Activated B cell treated with CpG ODN at 0.5 μM for 24 hours (primary cell): ENCODE measurements at regions of chr3 and their contacts with region 1.

Region 1: DNA sequence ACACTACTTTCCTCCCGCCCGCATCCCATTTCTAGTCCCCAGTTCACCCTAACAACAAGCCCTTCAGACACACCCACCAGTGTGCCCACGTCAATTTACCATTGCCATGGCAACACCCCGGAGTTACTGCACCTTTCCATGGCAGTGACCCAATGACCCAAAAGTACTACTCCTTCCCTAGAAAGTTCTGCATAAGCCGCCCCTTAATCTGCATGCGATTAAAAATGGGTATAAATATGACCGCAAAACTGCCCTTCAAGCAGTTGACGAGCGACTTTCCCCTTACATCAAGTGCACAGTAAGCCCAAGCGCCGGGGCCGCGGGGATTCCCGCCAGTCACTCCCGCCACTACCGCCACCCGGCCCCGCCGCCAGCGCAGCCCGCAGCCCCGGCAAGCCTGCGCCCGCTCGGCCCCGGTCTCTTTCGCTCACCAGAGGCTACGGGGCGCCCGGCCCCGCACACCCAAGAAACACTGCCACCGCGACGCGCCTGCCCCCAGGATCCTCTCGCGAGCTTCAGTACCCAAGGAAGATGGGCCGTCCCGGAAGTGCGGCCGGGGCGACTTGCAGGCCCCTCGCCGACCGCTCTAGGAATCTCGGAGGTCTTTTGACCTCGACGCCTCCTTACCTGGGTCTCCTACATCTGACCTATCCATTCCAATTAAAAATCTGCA is 27.2 kb upstream of the ZNF502 start:
- DNase-seq: peak; percentile 56
- ATAC-seq: peak; percentile 92
- H3K4me3 Mint-ChIP-seq: peak overlapping the region; percentile 96
- H3K27ac Mint-ChIP-seq: peak overlapping the region; percentile 76
- H3K4me1 Mint-ChIP-seq: peaks cover 19% of the 10 kb centered on the region
- H3K27me3 Mint-ChIP-seq: peaks cover 23% of the 10 kb centered on the region
- CTCF ChIP-seq: no peak

Region 2: GRCh38 chr3:44554626-44555592 is 130.4 kb before region 1 on chr3 and contains the start of gene ZKSCAN7:
- CTCF ChIA-PET with region 1: no interaction called
- POLR2A ChIA-PET with region 1: no interaction called
- intact Hi-C with region 1: loop called (anchors 1 kb)
- DNase-seq: peak; percentile 56
- ATAC-seq: peak; percentile 86
- H3K4me3 Mint-ChIP-seq: peak within 1 kb of the TSS; percentile 94
- H3K27ac Mint-ChIP-seq: peak within 1 kb of the TSS; percentile 87
- H3K4me1 Mint-ChIP-seq: peaks cover 20% of the 10 kb centered on the region
- H3K27me3 Mint-ChIP-seq: peaks cover 7% of the 10 kb centered on the region
- CTCF ChIP-seq: no peak
- total RNA-seq, gene ZKSCAN7: 6.8 and 9.2 TPM in 2 replicates

Region 3: DNA sequence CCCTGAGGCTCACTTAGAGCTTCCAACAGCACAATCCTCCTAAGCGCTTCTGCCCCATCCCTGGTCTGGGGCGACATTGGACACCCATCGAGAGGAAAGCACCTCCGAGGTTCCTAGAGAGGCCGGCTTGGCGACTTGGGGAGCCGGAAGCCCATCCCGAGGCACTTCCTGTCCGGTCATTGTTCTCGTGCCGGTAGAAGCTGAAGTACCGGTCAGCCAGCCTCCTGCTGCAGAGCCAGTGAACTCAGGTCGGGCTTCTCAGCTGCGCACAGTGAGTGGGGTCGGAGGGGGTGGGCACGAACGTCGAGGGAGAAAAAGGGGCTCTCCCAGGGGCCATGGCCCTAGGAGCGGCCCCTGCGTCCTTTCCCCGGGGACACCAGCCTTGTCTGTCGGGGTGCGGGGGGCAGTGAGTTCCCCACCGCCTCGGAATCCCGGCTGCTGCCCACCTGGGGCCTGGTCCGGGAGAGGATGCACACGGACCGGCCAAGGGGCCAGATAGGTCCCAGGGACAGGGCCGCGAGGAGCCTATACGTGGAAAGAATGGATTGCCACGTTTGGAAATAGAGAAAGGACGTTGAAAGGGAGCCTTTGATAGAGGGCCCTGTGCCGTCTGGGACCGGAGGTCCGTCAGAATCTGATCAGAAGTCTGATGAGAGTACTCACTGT is 36.6 kb before region 1 on chr3 and contains the start of gene ZNF35:
- CTCF ChIA-PET with region 1: no interaction called
- POLR2A ChIA-PET with region 1: interaction called, 4 read pairs
- intact Hi-C with region 1: loop called (anchors 1 kb)
- DNase-seq: peak; percentile 41
- ATAC-seq: peak; percentile 86
- H3K4me3 Mint-ChIP-seq: peak within 1 kb of the TSS; percentile 96
- H3K27ac Mint-ChIP-seq: peak within 1 kb of the TSS; percentile 83
- H3K4me1 Mint-ChIP-seq: peaks cover 24% of the 10 kb centered on the region
- H3K27me3 Mint-ChIP-seq: no peaks in the 10 kb centered on the region
- CTCF ChIP-seq: no peak
- total RNA-seq, gene ZNF35: 13.9 and 17.5 TPM in 2 replicates

Region 4: GRCh38 chr3:44712455-44713075 is 27.3 kb after region 1 on chr3 and contains the start of gene ZNF502:
- CTCF ChIA-PET with region 1: no interaction called
- POLR2A ChIA-PET with region 1: interaction called, 3 read pairs
- intact Hi-C with region 1: loop called (anchors 1 kb)
- DNase-seq: peak; percentile 48
- ATAC-seq: peak; percentile 93
- H3K4me3 Mint-ChIP-seq: peak within 1 kb of the TSS; percentile 90
- H3K27ac Mint-ChIP-seq: peak within 1 kb of the TSS; percentile 50
- H3K4me1 Mint-ChIP-seq: peaks cover 13% of the 10 kb centered on the region
- H3K27me3 Mint-ChIP-seq: peaks cover 21% of the 10 kb centered on the region
- CTCF ChIP-seq: no peak
- total RNA-seq, gene ZNF502: 5.0 and 6.5 TPM in 2 replicates

Region 5: DNA sequence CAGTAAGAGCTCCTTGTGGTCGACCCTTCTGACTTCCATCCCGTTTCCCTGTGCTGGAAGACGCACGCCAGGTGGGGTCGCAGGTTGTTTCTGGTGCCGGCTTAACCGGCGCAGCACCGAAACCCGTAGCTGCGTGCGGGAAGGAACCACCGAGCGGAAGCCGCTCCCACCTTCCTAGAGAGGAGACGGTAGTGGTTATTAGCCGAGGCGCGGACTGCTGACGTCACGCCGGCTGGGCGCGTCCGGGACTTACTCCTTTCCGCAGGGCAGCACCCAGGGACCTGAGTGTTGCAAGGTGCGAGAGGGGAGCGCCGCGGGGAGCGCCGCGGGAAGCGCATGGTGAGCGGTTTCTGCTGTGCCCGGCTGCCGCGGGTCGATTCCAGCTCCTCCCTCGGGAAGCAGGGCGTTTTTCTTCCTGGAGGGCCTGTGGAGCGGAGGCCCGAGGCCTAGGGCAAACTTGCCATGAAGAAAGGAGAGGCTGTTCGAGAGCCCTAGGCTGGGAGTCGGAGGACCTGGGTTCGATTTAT is 44.2 kb after region 1 on chr3 and contains the start of gene ZNF501:
- CTCF ChIA-PET with region 1: no interaction called
- POLR2A ChIA-PET with region 1: interaction called, 6 read pairs
- intact Hi-C with region 1: loop called (anchors 1 kb)
- DNase-seq: peak; percentile 80
- ATAC-seq: peak; percentile 98
- H3K4me3 Mint-ChIP-seq: peak within 1 kb of the TSS; percentile 92
- H3K27ac Mint-ChIP-seq: peak within 1 kb of the TSS; percentile 75
- H3K4me1 Mint-ChIP-seq: peaks cover 15% of the 10 kb centered on the region
- H3K27me3 Mint-ChIP-seq: no peaks in the 10 kb centered on the region
- CTCF ChIP-seq: no peak
- total RNA-seq, gene ZNF501: 6.2 and 6.5 TPM in 2 replicates

Region 6: DNA sequence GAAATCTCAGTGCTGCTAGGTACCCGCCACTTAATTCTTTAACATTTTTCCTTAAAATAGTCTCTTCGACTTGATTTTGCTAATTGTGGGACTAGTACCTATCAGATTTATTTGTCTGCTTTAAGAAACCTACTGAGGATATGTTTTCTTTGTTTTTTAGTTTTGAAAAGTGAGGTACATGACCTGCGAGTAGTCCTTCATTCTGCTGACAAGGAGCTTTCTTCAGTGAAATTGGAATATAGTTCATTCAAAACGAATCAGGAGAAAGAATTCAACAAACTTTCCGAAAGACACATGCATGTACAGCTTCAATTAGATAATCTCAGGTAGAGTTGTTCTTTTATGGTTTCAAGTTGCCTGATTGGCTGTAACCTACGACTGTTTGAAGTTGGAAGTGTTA is 129.5 kb after region 1 on chr3:
- CTCF ChIA-PET with region 1: no interaction called
- POLR2A ChIA-PET with region 1: no interaction called
- intact Hi-C with region 1: no loop called
- DNase-seq: no peak
- ATAC-seq: no peak
- H3K4me3 Mint-ChIP-seq: no peak overlapping the region
- H3K27ac Mint-ChIP-seq: no peak overlapping the region
- H3K4me1 Mint-ChIP-seq: no peaks in the 10 kb centered on the region
- H3K27me3 Mint-ChIP-seq: no peaks in the 10 kb centered on the region
- CTCF ChIP-seq: no peak